A673 (cell line): ENCODE measurements at regions of chr2 and their contacts with region 1.

Region 1: DNA sequence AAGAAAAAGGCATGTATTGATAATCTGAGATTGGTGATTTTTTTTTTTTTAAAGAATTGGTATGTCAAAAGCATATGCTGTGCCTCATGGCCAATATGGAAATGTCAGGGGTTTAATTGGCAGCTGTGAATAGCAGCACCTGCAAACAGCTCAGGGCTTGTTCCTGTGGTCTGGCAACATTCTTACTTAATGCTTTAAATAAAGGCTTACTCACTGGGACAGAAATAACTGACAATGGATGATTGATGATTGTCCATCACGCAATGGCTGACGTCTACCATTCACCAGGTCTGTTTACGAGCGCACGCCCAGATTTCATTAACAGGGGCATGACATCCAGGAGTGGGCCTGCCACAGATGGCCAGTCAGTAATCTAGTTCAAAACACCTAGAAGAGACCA is 66.7 kb downstream of the ETAA1 start:
- DNase-seq: no peak
- H3K4me3 ChIP-seq: no peak overlapping the region
- H3K27ac ChIP-seq: no peak overlapping the region
- H3K4me1 ChIP-seq: no peaks in the 10 kb centered on the region
- H3K27me3 ChIP-seq: no peaks in the 10 kb centered on the region
- CTCF ChIP-seq: no peak

Region 2: DNA sequence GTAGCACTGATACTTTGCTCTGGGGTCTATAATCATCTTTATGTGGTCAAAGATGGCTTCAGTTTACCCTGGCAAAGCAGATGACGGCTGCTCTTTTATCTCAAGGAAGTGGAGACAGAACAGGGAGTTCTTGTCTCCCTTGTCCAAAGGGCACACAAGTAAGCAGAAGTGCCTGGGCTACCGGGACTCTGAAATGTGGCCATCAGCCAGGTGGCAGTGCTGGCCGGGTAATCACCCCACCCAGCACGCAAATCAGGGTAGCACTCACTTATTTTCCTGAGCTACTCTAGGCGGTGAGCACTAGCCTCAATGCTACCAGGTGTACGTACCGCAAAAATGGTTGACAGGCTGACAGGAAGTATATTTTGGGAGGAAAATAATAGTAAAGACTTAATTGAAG is 186.4 kb before region 1 on chr2:
- CTCF ChIA-PET with region 1: no interaction called
- POLR2A ChIA-PET with region 1: no interaction called
- intact Hi-C with region 1: no loop called
- DNase-seq: no peak
- H3K4me3 ChIP-seq: no peak overlapping the region
- H3K27ac ChIP-seq: no peak overlapping the region
- H3K4me1 ChIP-seq: peaks cover 5% of the 10 kb centered on the region
- H3K27me3 ChIP-seq: no peaks in the 10 kb centered on the region
- CTCF ChIP-seq: no peak

Region 3: DNA sequence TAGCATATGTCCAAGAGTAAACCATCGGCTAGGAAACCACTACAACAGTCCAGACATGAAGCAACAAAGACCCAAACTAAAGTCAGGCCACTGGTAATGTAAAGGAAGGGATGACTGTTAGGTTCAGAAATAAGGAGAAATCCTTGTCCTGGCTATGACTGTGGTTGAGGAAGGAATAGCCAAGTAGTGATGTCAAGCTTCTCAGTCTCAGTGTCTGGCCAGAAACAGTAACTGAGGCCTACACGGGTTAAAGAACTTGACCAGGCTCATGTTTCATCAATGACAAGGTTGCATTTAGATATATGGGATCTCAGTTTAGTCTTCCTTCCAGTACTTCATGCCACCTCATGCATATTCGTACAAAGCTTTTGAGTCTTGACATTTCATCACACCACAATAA is 95.3 kb after region 1 on chr2:
- CTCF ChIA-PET with region 1: no interaction called
- POLR2A ChIA-PET with region 1: interaction called, 14 read pairs
- intact Hi-C with region 1: no loop called
- DNase-seq: no peak
- H3K4me3 ChIP-seq: no peak overlapping the region
- H3K27ac ChIP-seq: no peak overlapping the region
- H3K4me1 ChIP-seq: no peaks in the 10 kb centered on the region
- H3K27me3 ChIP-seq: no peaks in the 10 kb centered on the region
- CTCF ChIP-seq: no peak